K562 (cell line): ENCODE measurements at regions of chr12 and their contacts with region 1.

Region 1: DNA sequence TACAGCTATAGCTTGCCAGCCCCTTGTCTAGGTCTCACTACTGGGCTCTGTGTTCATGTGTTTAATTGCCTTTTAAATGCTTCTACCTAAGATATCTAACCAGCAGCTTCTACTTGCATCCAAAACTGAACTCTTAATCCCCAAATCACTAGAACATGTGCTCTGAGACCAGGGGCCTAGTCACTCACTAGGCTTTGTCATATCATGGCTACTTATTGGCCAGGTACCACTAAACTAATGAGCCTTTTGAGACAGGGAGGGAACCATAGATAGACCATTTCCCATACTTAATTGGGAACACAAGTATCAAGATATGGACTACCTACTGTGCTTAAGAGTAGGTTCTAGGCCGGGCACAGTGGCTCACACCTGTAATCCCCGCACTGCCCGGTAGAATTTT is 6.5 kb downstream of the HSP90B1 start:
- DNase-seq: no peak
- ATAC-seq: peak; percentile 20
- H3K4me3 ChIP-seq: no peak overlapping the region
- H3K27ac ChIP-seq: no peak overlapping the region
- H3K4me1 ChIP-seq: peaks cover 0 to 11% of the 10 kb centered on the region in 2 experiments; a peak in 4 of 5 replicates
- H3K27me3 ChIP-seq: no peaks in the 10 kb centered on the region
- CTCF ChIP-seq: no peak
- EP300 ChIP-seq: no peak
- POLR2A ChIP-seq: 0 out of 2 replicates have a peak, but pooled peaks have one; percentile 27
- RAD21 ChIP-seq: no peak

Region 2: DNA sequence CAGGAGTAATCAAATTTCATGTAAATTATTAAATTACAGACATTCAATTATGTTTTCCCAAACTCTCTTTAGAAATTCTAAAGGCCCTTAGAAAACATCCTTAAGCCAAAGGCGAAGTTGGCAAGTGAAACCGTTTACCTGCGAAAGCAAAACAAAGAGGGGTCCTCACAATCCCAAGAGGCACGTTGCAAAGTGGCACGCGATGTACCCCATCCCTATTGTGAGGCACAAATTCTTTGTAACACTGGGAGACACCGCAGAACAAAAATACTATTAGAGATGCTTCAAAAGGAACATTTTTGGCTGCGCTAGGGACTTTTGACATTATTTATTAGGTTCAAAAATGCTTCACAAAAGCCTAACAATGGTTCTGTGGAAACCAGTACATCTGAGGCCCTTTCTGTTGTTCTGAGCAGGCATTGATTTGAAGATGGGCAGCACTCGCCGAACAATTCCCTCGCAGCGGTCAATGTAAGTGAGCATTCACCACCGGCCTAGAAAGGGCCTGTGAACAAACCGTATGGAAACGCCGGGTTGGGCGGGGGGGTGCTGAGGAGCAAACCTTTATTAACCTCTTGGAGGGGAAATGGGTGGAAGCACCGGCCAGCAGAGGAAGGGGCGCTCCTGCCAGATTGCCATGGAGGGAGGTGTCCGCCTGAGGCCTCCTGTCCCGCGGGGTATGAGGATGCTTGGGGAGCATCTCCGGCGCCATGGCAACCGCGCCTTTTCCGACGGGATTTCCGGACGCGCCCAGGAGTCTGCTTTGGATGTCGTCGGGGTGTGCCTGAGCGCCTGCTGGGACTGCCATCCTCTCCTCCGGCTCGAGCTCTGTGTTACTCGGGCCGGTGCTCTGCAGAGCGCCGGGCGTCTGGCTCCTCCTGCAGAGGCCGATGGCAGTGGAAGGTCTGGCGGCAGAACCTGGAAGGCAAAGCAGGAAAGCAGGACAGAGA is 634.8 kb before region 1 on chr12:
- CTCF ChIA-PET with region 1: no interaction called
- POLR2A ChIA-PET with region 1: no interaction called
- in situ Hi-C with region 1: no loop called
- intact Hi-C with region 1: no loop called
- DNase-seq: no peak
- ATAC-seq: no peak
- H3K4me3 ChIP-seq: no peak overlapping the region
- H3K27ac ChIP-seq: no peak overlapping the region
- H3K4me1 ChIP-seq: no peaks in the 10 kb centered on the region
- H3K27me3 ChIP-seq: no peaks in the 10 kb centered on the region
- CTCF ChIP-seq: no peak
- EP300 ChIP-seq: no peak
- POLR2A ChIP-seq: no peak
- RAD21 ChIP-seq: no peak

Region 3: DNA sequence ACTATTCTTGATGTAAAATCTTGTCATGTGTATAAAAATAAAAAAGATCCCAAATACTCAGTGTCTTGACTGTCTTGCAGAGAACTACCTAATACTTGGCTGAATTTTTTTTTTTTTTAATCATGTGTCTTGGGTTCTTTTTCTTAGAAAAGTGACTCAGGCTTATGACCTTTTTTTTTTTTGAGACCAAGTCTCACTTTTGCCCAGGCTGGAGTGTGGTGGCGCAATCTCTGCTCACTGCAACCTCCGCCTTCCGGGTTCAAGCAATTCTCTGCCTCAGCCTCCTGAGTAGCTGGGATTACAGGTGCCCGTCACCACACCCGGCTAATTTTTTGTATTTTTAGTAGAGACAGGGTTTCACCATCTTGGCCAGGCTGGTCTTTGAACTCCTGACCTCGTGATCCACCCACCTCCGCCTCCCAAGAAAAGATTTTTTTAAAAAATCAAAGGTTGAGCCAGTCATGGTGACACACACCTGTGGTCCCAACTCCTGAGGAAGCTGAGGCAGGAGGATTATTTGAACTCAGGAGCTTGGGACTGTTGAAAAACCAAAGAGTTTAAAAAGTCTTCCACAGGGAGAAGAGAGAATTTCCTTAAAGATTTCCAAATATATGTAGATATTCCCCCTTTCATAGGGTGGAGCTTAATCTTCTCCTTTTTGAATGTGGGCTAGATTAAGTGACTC is 11.3 kb after region 1 on chr12:
- CTCF ChIA-PET with region 1: no interaction called
- POLR2A ChIA-PET with region 1: interaction called, 18 read pairs
- in situ Hi-C with region 1: no loop called
- intact Hi-C with region 1: no loop called
- DNase-seq: no peak
- ATAC-seq: peak; percentile 12
- H3K4me3 ChIP-seq: no peak overlapping the region
- H3K27ac ChIP-seq: peak overlapping the region; percentile 20; the same call in 1 of the 3 replicates
- H3K4me1 ChIP-seq: 0 out of 5 replicates have a peak, but pooled peaks cover 0 to 2% of the 10 kb centered on the region in 2 experiments
- H3K27me3 ChIP-seq: no peaks in the 10 kb centered on the region
- CTCF ChIP-seq: no peak
- EP300 ChIP-seq: no peak
- POLR2A ChIP-seq: no peak; the same call in 1 of the 2 replicates
- RAD21 ChIP-seq: no peak